Activated naive CD4-positive, alpha-beta T cell treated with anti-CD3 and anti-CD28 coated beads, Interleukin-2, amount 10 ng/mL, durations not matched to agents 7 days and 5 days (primary cell): ENCODE measurements at regions of chr17 and their contacts with region 1.

Region 1: GRCh38 chr17:28763804-28764266 is 20.0 kb downstream of the TRAF4 start:
- DNase-seq: peak; percentile 87
- H3K4me3 Mint-ChIP-seq: no peak overlapping the region
- H3K27ac Mint-ChIP-seq: peak overlapping the region; percentile 34
- H3K4me1 Mint-ChIP-seq: peaks cover 12% of the 10 kb centered on the region
- H3K27me3 Mint-ChIP-seq: no peaks in the 10 kb centered on the region

Region 2: DNA sequence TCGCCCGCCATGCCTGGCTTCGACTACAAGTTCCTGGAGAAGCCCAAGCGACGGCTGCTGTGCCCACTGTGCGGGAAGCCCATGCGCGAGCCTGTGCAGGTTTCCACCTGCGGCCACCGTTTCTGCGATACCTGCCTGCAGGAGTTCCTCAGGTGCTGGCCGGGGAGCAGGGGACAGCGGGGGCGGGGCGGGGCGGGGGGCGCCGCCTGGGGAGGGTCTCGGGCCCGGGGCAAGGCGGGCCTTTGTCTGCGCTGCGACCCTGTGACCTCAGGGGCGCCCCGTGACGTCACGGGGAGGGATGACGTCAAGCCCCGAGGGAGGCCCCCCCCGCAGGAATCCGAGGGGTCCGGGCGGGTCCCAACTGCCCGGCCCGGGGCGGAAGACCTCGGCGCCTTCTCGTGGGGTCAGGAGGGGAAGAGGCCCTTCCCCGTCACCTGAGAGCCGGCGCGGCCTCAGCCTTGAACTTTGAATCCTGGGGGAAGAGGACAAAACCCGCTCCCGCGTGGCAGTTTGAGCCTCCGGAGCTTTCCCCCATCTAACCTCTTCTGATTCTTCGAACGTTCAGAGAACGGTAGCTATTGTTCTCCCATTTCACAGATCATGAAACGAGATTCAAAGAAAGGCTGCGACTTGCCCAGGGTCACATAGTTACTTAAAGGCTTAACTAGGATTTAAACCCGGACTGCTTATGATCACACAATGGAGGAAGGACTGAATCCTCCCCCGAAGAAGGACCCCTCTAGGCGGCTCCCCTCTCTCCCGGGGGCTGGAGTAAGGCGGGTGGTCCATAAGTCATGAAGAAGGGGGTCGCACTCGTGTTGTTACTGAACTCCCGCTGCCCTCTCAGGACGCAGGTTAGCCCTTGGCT is 19.5 kb before region 1 on chr17:
- CTCF ChIA-PET with region 1: interaction called, 58 read pairs
- DNase-seq: peak; percentile 79
- H3K4me3 Mint-ChIP-seq: peak overlapping the region; percentile 89
- H3K27ac Mint-ChIP-seq: peak overlapping the region; percentile 94
- H3K4me1 Mint-ChIP-seq: peaks cover 41% of the 10 kb centered on the region
- H3K27me3 Mint-ChIP-seq: no peaks in the 10 kb centered on the region

Region 3: GRCh38 chr17:28807925-28808634 is 44.2 kb after region 1 on chr17:
- CTCF ChIA-PET with region 1: interaction called, 13 read pairs
- DNase-seq: no peak
- H3K4me3 Mint-ChIP-seq: no peak overlapping the region
- H3K27ac Mint-ChIP-seq: no peak overlapping the region
- H3K4me1 Mint-ChIP-seq: peaks cover 29% of the 10 kb centered on the region
- H3K27me3 Mint-ChIP-seq: no peaks in the 10 kb centered on the region

Region 4: DNA sequence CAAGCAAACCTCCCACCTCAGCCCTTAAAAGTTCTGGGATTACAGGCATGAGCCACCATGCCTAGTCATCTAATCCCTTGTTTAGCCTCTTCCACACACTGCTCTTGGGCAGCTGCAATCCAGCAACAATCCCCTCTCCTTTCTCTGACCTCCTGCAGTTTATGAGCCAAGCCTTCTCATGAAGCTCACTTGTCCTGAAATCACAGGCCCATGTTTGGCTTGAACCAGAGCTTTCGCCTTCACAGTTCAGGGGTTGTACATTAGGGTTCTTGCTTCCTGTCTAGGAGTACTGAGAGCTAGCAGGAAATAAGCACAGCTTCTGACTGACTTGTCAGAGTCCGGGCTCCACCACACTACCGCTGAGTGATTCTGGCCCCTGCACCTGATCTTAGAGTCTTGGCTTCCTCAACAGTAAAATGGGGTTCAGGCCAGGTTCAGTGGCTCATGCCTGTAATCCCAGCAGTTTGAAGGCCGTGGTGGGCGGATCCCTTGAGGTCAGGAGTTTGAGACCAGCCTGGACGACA is 107.3 kb after region 1 on chr17:
- CTCF ChIA-PET with region 1: interaction called, 16 read pairs
- DNase-seq: peak; percentile 71
- H3K4me3 Mint-ChIP-seq: peak overlapping the region; percentile 39
- H3K27ac Mint-ChIP-seq: peak overlapping the region; percentile 97
- H3K4me1 Mint-ChIP-seq: peaks cover 19% of the 10 kb centered on the region
- H3K27me3 Mint-ChIP-seq: no peaks in the 10 kb centered on the region

Region 5: GRCh38 chr17:28896884-28897768 is 133.3 kb after region 1 on chr17 and contains the start of gene FLOT2:
- CTCF ChIA-PET with region 1: interaction called, 47 read pairs
- DNase-seq: peak; percentile 78
- H3K4me3 Mint-ChIP-seq: peak within 1 kb of the TSS; percentile 98
- H3K27ac Mint-ChIP-seq: peak within 1 kb of the TSS; percentile 95
- H3K4me1 Mint-ChIP-seq: peaks cover 71% of the 10 kb centered on the region
- H3K27me3 Mint-ChIP-seq: no peaks in the 10 kb centered on the region

Region 6: DNA sequence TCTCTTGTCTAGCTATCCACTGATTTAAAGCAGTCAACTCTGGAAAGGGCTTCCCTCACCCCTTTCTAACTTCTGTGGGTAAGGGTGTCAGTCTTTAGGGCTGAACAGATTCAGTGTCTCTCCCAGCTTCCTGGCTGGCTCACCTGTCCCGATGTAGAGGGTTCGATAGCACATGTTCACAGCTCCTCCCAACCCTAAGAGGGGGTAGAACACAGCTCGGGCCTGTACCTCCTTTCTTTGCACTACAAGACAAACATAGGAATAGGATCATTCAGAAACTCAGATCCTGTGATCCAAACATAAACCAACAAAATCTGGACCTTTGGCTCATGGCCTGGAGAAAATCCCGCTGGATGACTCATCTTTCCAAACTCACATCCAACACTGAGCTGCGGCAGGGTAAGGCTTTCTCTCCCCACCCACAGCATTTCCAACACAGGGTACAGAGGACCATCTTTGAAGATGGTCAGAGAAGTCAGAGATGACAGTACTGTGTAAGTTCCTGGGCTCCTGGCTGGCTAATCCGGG is 144.9 kb after region 1 on chr17:
- CTCF ChIA-PET with region 1: interaction called, 47 read pairs
- DNase-seq: no peak
- H3K4me3 Mint-ChIP-seq: no peak overlapping the region
- H3K27ac Mint-ChIP-seq: no peak overlapping the region
- H3K4me1 Mint-ChIP-seq: peaks cover 7% of the 10 kb centered on the region
- H3K27me3 Mint-ChIP-seq: no peaks in the 10 kb centered on the region

Region 7: DNA sequence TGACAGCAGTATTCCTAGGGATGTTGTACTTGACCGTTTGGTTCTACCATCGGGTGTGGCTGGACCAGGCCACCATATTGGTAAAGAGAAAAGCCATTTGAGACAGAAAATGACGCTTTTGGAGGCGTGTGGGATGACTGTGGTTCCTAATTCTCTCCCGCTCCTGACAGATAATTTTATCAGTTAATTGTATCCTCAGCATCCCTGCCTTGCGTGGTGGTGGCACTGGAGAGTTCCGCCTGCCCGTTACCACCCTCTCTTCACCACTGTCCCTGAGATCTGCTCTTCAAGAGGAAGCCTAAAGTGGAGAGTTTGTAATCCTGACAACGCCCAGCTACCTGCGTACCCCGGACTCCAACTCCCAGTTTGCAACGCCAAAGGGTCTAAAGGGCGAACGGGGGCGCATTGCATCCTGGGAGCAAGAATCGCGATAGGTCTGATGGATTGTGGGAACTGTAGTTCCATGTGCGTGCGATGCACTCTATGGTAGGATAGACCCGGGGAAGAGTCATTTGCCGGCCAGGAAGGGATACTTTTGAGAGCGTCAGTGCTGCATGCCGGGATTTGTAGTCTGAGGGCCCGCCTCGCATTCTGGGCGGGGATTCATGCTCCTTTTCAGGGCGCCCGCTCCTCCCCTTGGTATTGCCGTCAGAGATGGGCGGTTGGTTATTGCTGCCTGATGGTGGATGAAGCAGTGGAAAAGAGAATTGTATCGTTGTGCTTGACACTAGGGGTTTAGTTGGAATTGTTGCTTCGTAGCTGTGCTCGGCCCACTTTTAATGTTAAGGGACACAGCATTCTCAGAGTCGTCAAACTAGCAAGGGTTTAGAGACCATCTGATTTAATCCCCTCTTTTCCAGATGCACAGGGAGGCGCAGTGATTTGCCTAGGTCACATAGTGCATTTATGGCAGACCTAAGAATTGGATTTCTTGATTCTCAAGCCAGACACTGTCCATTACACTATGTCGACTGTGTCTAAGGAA is 188.4 kb after region 1 on chr17:
- CTCF ChIA-PET with region 1: interaction called, 17 read pairs
- DNase-seq: peak; percentile 98
- H3K4me3 Mint-ChIP-seq: no peak overlapping the region
- H3K27ac Mint-ChIP-seq: no peak overlapping the region
- H3K4me1 Mint-ChIP-seq: peaks cover 18% of the 10 kb centered on the region
- H3K27me3 Mint-ChIP-seq: peaks cover 3% of the 10 kb centered on the region